ENCODE measurements at regions of chr7 and their contacts with region 1.

Region 1: DNA sequence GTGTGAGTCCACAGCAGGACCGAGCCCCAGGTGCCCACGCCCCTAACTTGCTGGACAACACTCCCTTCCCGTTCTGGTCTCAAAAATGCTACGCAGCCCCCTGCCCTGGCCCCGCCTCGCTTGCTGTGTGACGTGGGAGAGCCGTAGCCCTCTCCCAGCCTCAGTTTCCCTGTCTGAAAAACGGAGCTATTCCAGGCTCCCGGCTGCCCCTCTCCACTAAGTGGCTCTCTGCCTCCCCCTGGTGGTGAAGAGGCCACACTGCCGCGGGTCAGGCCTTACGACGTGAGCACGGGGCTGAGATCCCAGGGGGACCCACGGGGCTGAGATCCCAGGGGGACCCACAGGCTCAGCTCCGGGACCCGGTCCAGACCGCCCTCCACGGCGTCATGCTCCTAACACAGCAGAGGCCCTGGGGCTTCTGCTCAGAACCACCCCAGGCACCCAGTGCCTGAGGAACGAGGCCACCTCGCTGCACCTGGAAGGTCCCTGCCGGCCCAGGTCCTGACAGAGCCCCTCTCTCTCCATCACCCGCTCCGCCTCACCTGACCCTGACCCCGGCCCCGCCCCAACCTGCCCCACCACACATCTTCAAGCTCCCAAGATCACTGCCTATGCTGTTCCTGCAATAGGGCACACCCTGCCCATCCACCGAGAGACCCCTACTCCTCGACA is 26.7 kb downstream of the MICALL2 start:
- DNase-seq: peak; percentile 23
- H3K4me3 ChIP-seq: no peak overlapping the region
- H3K27ac ChIP-seq: no peak overlapping the region
- H3K4me1 ChIP-seq: peaks cover 7% of the 10 kb centered on the region
- H3K27me3 ChIP-seq: no peaks in the 10 kb centered on the region
- CTCF ChIP-seq: peak; percentile 79 to 98

Region 2: GRCh38 chr7:1086588-1087464 is 345.7 kb before region 1 on chr7:
- CTCF ChIA-PET with region 1: interaction called, 14 read pairs
- dilution Hi-C with region 1: no loop called
- in situ Hi-C with region 1: no loop called
- intact Hi-C with region 1: no loop called
- DNase-seq: peak; percentile 71
- H3K4me3 ChIP-seq: peak overlapping the region; percentile 38 to 45 (median 43)
- H3K27ac ChIP-seq: peak overlapping the region; percentile 50
- H3K4me1 ChIP-seq: peaks cover 21% of the 10 kb centered on the region
- H3K27me3 ChIP-seq: no peaks in the 10 kb centered on the region
- CTCF ChIP-seq: peak; percentile 53 to 85

Region 3: DNA sequence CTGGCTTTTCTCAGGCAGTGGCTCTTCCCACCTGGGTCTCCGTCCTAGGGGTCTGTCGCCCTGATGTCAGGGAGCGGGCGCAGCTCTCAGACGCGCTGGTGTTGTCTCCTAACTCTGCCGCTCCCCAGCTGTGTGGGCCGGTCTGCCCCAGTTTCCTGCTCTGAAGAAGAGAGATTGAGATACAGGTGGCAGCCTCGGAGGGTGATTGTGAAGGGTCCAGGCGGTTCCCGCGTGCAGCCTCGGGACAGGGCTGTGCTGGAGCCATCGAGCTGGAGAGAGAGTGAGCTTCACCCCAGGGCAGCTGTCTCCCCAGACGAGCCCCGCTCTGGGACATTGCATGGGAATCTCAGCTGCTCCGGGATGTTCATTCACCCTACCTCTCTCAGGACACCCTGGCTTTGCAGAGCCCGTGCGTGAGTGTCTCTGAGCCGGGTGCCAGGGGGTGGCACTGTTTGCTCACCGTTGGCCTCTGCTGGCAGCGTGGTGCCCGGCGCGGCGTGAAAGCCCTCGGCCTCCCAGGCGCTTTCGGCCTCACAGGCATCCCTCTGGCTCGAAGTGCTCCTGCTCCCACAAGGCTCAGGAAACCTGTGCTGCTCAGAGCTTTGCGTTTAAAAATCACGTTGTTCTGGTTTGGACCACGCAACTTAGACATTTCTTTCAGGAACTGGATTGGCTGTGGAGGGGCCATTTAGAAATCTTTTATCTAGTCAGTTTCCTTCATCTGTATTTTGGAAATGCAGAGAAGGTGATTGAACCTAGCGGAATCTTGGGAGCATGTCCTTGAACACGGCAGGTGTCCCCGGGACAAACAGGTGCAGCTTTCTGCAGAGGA is 238.7 kb before region 1 on chr7:
- CTCF ChIA-PET with region 1: no interaction called
- dilution Hi-C with region 1: no loop called
- in situ Hi-C with region 1: no loop called
- intact Hi-C with region 1: loop called (anchors 1 kb)
- DNase-seq: peak; percentile 39
- H3K4me3 ChIP-seq: no peak overlapping the region
- H3K27ac ChIP-seq: no peak overlapping the region
- H3K4me1 ChIP-seq: no peaks in the 10 kb centered on the region
- H3K27me3 ChIP-seq: no peaks in the 10 kb centered on the region
- CTCF ChIP-seq: peak; percentile 48 to 85

Region 4: DNA sequence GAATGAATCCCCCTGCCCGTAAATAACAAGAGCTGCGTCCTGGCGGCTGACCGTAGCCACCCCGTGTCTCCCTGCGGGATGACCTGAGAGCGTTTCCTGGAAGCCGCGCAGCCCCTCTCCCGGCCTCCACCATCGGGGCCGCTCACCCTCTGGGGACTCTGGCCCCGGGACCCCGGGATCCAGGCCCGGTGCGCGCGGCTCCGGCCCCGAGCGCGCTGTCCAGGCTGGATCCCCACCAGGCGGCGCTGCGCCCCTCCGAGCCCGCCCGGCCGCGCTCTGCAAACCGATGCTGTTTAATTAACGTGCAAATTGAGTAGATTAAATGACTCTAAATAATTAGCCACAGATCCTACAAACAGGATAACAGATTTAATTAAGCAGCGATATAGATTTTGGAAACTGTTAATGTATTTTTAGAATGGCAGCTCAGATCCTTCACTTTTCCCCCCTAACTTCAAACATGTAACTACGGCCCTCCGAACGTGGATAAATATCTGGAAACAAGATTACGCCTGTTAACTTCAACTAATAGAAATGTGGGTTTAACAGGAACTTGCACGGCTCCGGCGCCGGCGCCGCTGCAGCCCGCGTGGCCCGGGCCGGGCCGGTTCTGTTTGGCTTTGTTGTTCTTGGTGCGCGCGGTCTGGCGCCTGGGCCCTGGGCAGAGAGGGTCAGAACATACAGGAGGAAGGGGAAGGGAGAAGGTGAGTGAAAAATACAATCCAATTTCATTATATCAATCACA is 206.9 kb before region 1 on chr7:
- CTCF ChIA-PET with region 1: no interaction called
- dilution Hi-C with region 1: no loop called
- in situ Hi-C with region 1: no loop called
- intact Hi-C with region 1: loop called (anchors 1 kb)
- DNase-seq: no peak
- H3K4me3 ChIP-seq: no peak overlapping the region
- H3K27ac ChIP-seq: no peak overlapping the region
- H3K4me1 ChIP-seq: no peaks in the 10 kb centered on the region
- H3K27me3 ChIP-seq: peaks cover 60% of the 10 kb centered on the region
- CTCF ChIP-seq: peak; percentile 37 to 60

Region 5: DNA sequence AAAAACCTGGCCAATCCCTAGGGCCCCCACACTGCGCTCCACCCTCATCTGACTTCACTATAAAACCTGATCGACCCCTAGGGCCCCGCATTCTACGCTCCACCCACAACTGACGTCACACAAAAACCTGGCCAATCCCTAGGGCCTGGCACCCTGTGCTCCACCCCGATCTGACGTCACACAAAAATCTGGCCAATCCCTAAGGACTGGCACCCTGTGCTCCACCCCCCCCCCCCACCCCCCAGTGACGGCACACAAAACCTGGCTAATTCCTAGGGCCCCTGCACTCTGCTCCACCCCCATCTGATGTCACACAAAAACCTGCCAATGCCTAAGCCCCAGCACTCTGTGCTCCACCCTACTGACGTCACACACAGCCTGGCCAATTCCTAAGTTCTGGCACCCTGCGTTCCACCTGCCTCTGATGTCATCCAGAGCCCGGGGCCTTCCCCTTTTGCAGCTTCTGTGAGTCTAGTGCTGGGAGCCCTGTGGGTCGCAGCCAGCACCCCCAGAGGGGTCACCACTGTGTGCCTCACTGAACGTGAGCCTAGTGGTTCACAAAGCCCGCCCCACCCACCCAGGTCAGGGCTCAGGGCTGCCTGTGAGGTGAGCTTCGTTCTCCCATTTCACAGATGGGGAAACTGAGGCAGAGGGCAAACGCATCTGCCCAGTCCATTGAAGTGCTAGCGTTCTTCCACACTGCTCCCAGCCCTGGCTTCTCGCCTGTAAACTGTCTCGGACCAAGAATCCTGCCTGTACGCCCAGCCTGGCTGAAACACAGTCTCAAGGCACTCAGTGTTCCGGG is 13.8 kb before region 1 on chr7:
- CTCF ChIA-PET with region 1: no interaction called
- dilution Hi-C with region 1: no loop called
- in situ Hi-C with region 1: no loop called
- intact Hi-C with region 1: no loop called
- DNase-seq: no peak
- H3K4me3 ChIP-seq: no peak overlapping the region
- H3K27ac ChIP-seq: no peak overlapping the region
- H3K4me1 ChIP-seq: no peaks in the 10 kb centered on the region
- H3K27me3 ChIP-seq: peaks cover 7% of the 10 kb centered on the region
- CTCF ChIP-seq: no peak

Region 6: GRCh38 chr7:1473864-1474512 is 41.4 kb after region 1 on chr7:
- CTCF ChIA-PET with region 1: no interaction called
- dilution Hi-C with region 1: no loop called
- in situ Hi-C with region 1: no loop called
- intact Hi-C with region 1: loop called (anchors 2 kb)
- DNase-seq: peak; percentile 79
- H3K4me3 ChIP-seq: no peak overlapping the region
- H3K27ac ChIP-seq: no peak overlapping the region
- H3K4me1 ChIP-seq: peaks cover 8% of the 10 kb centered on the region
- H3K27me3 ChIP-seq: no peaks in the 10 kb centered on the region
- CTCF ChIP-seq: peak; percentile 73 to 92

Region 7: GRCh38 chr7:1503816-1504775 is 71.5 kb after region 1 on chr7 and contains the start of gene INTS1:
- CTCF ChIA-PET with region 1: no interaction called
- dilution Hi-C with region 1: loop called (anchors 5 kb)
- in situ Hi-C with region 1: no loop called
- intact Hi-C with region 1: no loop called
- DNase-seq: peak; percentile 94
- H3K4me3 ChIP-seq: peak within 1 kb of the TSS; percentile 83 to 95 (median 95)
- H3K27ac ChIP-seq: peak within 1 kb of the TSS; percentile 53
- H3K4me1 ChIP-seq: peaks cover 16% of the 10 kb centered on the region
- H3K27me3 ChIP-seq: no peaks in the 10 kb centered on the region
- CTCF ChIP-seq: peak; percentile 58 to 71
- total RNA-seq, gene INTS1: 51.3 to 81.1 TPM